Naive thymus-derived CD4-positive, alpha-beta T cell (primary cell): ENCODE measurements at regions of chr7 and their contacts with region 1.

Region 1: GRCh38 chr7:92075434-92076158 is 58.7 kb downstream of the CYP51A1 start:
- DNase-seq: no peak
- ATAC-seq: no peak
- H3K4me3 ChIP-seq: no peak overlapping the region
- H3K4me3 Mint-ChIP-seq: no peak overlapping the region
- H3K27ac ChIP-seq: no peak overlapping the region
- H3K27ac Mint-ChIP-seq: no peak overlapping the region
- H3K4me1 ChIP-seq: no peaks in the 10 kb centered on the region
- H3K4me1 Mint-ChIP-seq: peaks cover 0 to 9% (median 0%) of the 10 kb centered on the region in 7 donors
- H3K27me3 ChIP-seq: no peaks in the 10 kb centered on the region
- H3K27me3 Mint-ChIP-seq: no peaks in the 10 kb centered on the region

Region 2: GRCh38 chr7:91771921-91772815 is 303.4 kb before region 1 on chr7:
- CTCF ChIA-PET with region 1: no interaction called
- POLR2A ChIA-PET with region 1: no interaction called
- intact Hi-C with region 1: no loop called
- DNase-seq: no peak
- ATAC-seq: no peak
- H3K4me3 ChIP-seq: no peak overlapping the region
- H3K4me3 Mint-ChIP-seq: no peak overlapping the region
- H3K27ac ChIP-seq: no peak overlapping the region
- H3K27ac Mint-ChIP-seq: no peak overlapping the region
- H3K4me1 ChIP-seq: no peaks in the 10 kb centered on the region
- H3K4me1 Mint-ChIP-seq: no peaks in the 10 kb centered on the region
- H3K27me3 ChIP-seq: no peaks in the 10 kb centered on the region
- H3K27me3 Mint-ChIP-seq: peaks cover 0 to 5% (median 0%) of the 10 kb centered on the region in 5 donors

Region 3: DNA sequence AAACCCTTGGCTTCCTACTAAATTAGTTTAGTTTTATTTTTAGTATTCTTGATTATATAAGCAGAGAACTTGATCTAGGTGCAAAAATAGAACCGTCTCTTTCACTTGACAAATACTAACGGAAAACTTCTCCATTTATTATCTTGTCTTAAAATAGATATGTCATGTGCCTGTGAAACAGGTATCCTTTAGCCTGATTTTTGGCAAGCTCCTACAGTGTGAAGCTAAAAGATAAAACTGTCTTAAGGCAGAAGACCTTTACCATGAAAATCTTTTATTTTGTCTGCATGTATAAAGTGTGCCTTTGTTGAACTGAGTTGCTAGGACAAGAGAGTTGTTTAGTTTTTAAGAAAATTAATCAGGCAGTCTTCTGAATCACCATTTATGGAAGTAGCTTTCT is 32.0 kb before region 1 on chr7:
- CTCF ChIA-PET with region 1: no interaction called
- POLR2A ChIA-PET with region 1: no interaction called
- intact Hi-C with region 1: no loop called
- DNase-seq: no peak
- ATAC-seq: no peak
- H3K4me3 ChIP-seq: no peak overlapping the region
- H3K4me3 Mint-ChIP-seq: no peak overlapping the region
- H3K27ac ChIP-seq: no peak overlapping the region
- H3K27ac Mint-ChIP-seq: no peak overlapping the region
- H3K4me1 ChIP-seq: no peaks in the 10 kb centered on the region
- H3K4me1 Mint-ChIP-seq: no peaks in the 10 kb centered on the region
- H3K27me3 ChIP-seq: no peaks in the 10 kb centered on the region
- H3K27me3 Mint-ChIP-seq: no peaks in the 10 kb centered on the region

Region 4: GRCh38 chr7:92092210-92092609 is 16.6 kb after region 1 on chr7:
- CTCF ChIA-PET with region 1: no interaction called
- POLR2A ChIA-PET with region 1: no interaction called
- intact Hi-C with region 1: loop called in 1 of 2 experiments (anchors 2 kb)
- DNase-seq: no peak
- ATAC-seq: no peak
- H3K4me3 ChIP-seq: no peak overlapping the region
- H3K4me3 Mint-ChIP-seq: no peak overlapping the region
- H3K27ac ChIP-seq: no peak overlapping the region
- H3K27ac Mint-ChIP-seq: peak overlapping the region in 1 of 9 donors; percentile 41
- H3K4me1 ChIP-seq: no peaks in the 10 kb centered on the region
- H3K4me1 Mint-ChIP-seq: peaks cover 0 to 2% (median 0%) of the 10 kb centered on the region in 7 donors
- H3K27me3 ChIP-seq: no peaks in the 10 kb centered on the region
- H3K27me3 Mint-ChIP-seq: no peaks in the 10 kb centered on the region

Region 5: GRCh38 chr7:92192326-92192725 is 116.7 kb after region 1 on chr7:
- CTCF ChIA-PET with region 1: no interaction called
- POLR2A ChIA-PET with region 1: no interaction called
- intact Hi-C with region 1: no loop called
- DNase-seq: no peak
- ATAC-seq: no peak
- H3K4me3 ChIP-seq: no peak overlapping the region
- H3K4me3 Mint-ChIP-seq: no peak overlapping the region
- H3K27ac ChIP-seq: no peak overlapping the region
- H3K27ac Mint-ChIP-seq: no peak overlapping the region
- H3K4me1 ChIP-seq: no peaks in the 10 kb centered on the region
- H3K4me1 Mint-ChIP-seq: peaks cover 0 to 2% (median 0%) of the 10 kb centered on the region in 7 donors
- H3K27me3 ChIP-seq: no peaks in the 10 kb centered on the region
- H3K27me3 Mint-ChIP-seq: no peaks in the 10 kb centered on the region

Region 6: GRCh38 chr7:92375013-92375412 is 299.4 kb after region 1 on chr7:
- CTCF ChIA-PET with region 1: no interaction called
- POLR2A ChIA-PET with region 1: no interaction called
- intact Hi-C with region 1: no loop called
- DNase-seq: no peak
- ATAC-seq: no peak
- H3K4me3 ChIP-seq: no peak overlapping the region
- H3K4me3 Mint-ChIP-seq: no peak overlapping the region
- H3K27ac ChIP-seq: no peak overlapping the region
- H3K27ac Mint-ChIP-seq: no peak overlapping the region
- H3K4me1 ChIP-seq: no peaks in the 10 kb centered on the region
- H3K4me1 Mint-ChIP-seq: no peaks in the 10 kb centered on the region
- H3K27me3 ChIP-seq: no peaks in the 10 kb centered on the region
- H3K27me3 Mint-ChIP-seq: no peaks in the 10 kb centered on the region